Ascending aorta (tissue), 2 donors: ENCODE measurements at regions of chr6 and their contacts with region 1.

Region 1: DNA sequence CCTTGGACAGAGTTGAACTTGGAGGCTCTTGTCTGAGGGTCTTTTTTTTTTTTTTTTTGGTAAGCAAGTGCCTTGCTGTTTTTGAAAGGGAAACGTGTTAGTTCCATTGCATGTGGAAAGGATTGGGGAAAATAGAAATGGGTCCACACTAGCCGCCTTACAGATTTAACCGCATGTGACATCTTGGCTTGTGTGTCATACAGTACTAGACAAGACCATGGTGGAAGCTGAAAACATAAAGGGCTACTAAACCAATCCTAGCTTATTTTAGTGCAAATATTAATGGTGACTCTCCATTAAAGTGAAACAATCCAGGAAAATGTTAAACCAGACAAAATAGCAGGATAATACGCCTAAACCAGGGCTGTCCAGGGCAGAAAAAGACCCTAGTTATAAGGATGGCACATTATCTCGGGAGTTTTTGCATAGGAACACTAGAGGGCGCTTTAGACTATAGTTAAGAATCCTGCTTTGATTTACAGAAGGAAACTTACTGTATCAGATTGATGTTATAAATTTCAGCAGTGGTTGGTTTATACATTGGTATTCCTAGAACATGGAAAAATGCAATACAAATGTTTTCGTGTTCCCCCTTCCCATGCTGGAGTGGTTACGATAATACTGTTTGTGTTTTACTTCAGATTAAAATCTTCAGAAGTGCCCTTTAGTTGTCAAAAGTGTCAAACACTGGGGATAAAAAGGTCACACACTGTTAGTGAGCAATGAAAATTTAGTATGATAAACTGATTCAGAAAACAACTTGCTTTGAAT is 59.8 kb upstream of the DEK start:
- DNase-seq: no peak
- H3K4me3 ChIP-seq: no peak overlapping the region
- H3K27ac ChIP-seq: no peak overlapping the region
- H3K4me1 ChIP-seq: peaks cover 0 to 7% of the 10 kb centered on the region in 2 donors
- H3K27me3 ChIP-seq: no peaks in the 10 kb centered on the region
- CTCF ChIP-seq: peak; percentile 71 to 84 (median 74)

Region 2: GRCh38 chr6:18415671-18416340 is 91.7 kb after region 1 on chr6:
- intact Hi-C with region 1: loop called (anchors 10 kb)
- DNase-seq: no peak
- H3K4me3 ChIP-seq: peak overlapping the region in 1 of 2 donors; percentile 22
- H3K27ac ChIP-seq: peak overlapping the region; percentile 77 to 83
- H3K4me1 ChIP-seq: peaks cover 5 to 15% of the 10 kb centered on the region in 2 donors
- H3K27me3 ChIP-seq: no peaks in the 10 kb centered on the region
- CTCF ChIP-seq: no peak

Region 3: GRCh38 chr6:18503593-18504231 is 179.6 kb after region 1 on chr6:
- intact Hi-C with region 1: loop called (anchors 1 kb)
- DNase-seq: peak in 1 of 2 donors; percentile 78
- H3K4me3 ChIP-seq: peak overlapping the region; percentile 32 to 55
- H3K27ac ChIP-seq: no peak overlapping the region
- H3K4me1 ChIP-seq: no peaks in the 10 kb centered on the region
- H3K27me3 ChIP-seq: no peaks in the 10 kb centered on the region
- CTCF ChIP-seq: peak; percentile 81 to 95 (median 93)